CD4-positive, alpha-beta T cell (primary cell): ENCODE measurements at regions of chr9 and their contacts with region 1.

Region 1: GRCh38 chr9:88388172-88388885 is at the start of gene SPIN1:
- DNase-seq: peak; percentile 69 to 94 (median 84)
- ATAC-seq: peak; percentile 69
- H3K4me3 ChIP-seq: peak within 1 kb of the TSS; percentile 79
- H3K4me3 Mint-ChIP-seq: peak within 1 kb of the TSS; percentile 98
- H3K27ac ChIP-seq: peak within 1 kb of the TSS; percentile 45 to 64
- H3K27ac Mint-ChIP-seq: peak within 1 kb of the TSS; percentile 100
- H3K4me1 ChIP-seq: peaks cover 15% of the 10 kb centered on the region
- H3K4me1 Mint-ChIP-seq: peaks cover 47% of the 10 kb centered on the region
- H3K27me3 ChIP-seq: no peaks in the 10 kb centered on the region
- H3K27me3 Mint-ChIP-seq: no peaks in the 10 kb centered on the region
- CTCF ChIP-seq: no peak
- total RNA-seq, gene SPIN1: 27.7 to 30.3 TPM

Region 2: GRCh38 chr9:88173378-88173999 is 214.8 kb before region 1 on chr9:
- CTCF ChIA-PET with region 1: no interaction called
- POLR2A ChIA-PET with region 1: no interaction called
- intact Hi-C with region 1: loop called (anchors 1 to 10 kb)
- DNase-seq: peak; percentile 5 to 76 (median 44)
- ATAC-seq: peak; percentile 48
- H3K4me3 ChIP-seq: no peak overlapping the region
- H3K4me3 Mint-ChIP-seq: no peak overlapping the region
- H3K27ac ChIP-seq: no peak overlapping the region
- H3K27ac Mint-ChIP-seq: no peak overlapping the region
- H3K4me1 ChIP-seq: no peaks in the 10 kb centered on the region
- H3K4me1 Mint-ChIP-seq: peaks cover 1% of the 10 kb centered on the region
- H3K27me3 ChIP-seq: no peaks in the 10 kb centered on the region
- H3K27me3 Mint-ChIP-seq: peaks cover 3% of the 10 kb centered on the region
- CTCF ChIP-seq: peak; percentile 91

Region 3: DNA sequence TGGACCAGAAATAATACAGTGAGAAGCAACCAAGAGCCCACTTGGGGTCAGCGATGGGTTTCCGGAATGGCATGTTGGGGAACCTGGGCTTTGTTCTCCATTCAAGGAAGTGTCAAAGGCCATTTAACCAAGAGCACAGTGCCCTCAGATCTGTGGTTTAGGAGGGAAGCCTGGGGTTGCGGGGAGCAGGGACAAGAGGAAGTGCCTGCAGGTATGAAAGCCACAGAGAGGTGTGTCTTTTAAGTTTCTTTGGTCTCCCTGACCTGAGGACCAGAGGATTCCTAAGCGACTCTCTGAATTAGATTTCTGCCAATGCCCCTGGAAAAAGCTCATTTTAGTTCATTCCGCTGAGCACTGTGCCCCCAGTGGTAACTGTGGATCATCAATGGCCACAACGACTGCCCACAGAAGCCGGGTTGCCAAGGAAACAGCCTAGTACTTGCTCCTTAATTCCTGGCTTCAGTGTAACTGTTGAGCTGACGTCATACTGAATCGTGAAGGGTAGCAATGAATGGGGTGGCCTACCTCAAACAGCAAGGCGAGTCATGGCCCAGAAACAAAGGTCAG is 107.4 kb before region 1 on chr9:
- CTCF ChIA-PET with region 1: no interaction called
- POLR2A ChIA-PET with region 1: no interaction called
- intact Hi-C with region 1: no loop called
- DNase-seq: no peak
- ATAC-seq: no peak
- H3K4me3 ChIP-seq: no peak overlapping the region
- H3K4me3 Mint-ChIP-seq: no peak overlapping the region
- H3K27ac ChIP-seq: no peak overlapping the region
- H3K27ac Mint-ChIP-seq: no peak overlapping the region
- H3K4me1 ChIP-seq: peaks cover 7% of the 10 kb centered on the region
- H3K4me1 Mint-ChIP-seq: peaks cover 10% of the 10 kb centered on the region
- H3K27me3 ChIP-seq: no peaks in the 10 kb centered on the region
- H3K27me3 Mint-ChIP-seq: no peaks in the 10 kb centered on the region
- CTCF ChIP-seq: no peak

Region 4: DNA sequence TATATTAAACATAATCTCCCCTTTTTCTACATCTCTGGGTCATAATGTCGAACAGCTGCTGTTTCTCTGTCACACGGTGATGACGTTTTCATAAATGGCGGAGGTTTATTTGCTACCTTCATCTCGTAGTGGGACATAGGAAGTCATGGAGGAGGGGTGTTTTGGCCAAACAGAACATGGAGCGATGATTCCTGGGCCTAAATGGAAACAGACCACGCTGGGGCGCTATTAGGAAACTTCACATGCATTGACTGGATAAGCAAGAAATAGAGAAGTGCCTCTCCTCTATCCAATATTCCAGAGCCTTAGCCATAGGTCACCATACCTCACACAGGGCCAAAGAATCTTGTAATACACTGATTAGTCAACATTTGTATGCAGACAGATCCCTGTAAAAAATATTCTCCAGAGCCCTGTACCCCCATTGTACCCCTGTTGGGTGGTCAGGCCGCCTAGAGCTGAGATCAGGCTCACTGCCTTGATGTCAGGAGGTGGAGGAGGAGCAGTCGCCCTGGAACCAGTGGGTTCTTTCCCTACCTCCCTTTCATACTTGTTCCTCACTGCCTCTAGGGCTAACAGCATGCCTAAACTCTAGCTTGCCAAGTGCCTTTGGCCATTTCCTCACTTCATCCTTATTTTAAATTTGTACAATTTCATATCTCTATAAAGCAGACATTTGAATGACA is 77.9 kb before region 1 on chr9:
- CTCF ChIA-PET with region 1: no interaction called
- POLR2A ChIA-PET with region 1: no interaction called
- intact Hi-C with region 1: no loop called
- DNase-seq: no peak
- ATAC-seq: no peak
- H3K4me3 ChIP-seq: no peak overlapping the region
- H3K4me3 Mint-ChIP-seq: no peak overlapping the region
- H3K27ac ChIP-seq: no peak overlapping the region
- H3K27ac Mint-ChIP-seq: no peak overlapping the region
- H3K4me1 ChIP-seq: peaks cover 19% of the 10 kb centered on the region
- H3K4me1 Mint-ChIP-seq: peaks cover 27% of the 10 kb centered on the region
- H3K27me3 ChIP-seq: no peaks in the 10 kb centered on the region
- H3K27me3 Mint-ChIP-seq: no peaks in the 10 kb centered on the region
- CTCF ChIP-seq: no peak

Region 5: GRCh38 chr9:88322906-88323566 is 65.3 kb before region 1 on chr9:
- CTCF ChIA-PET with region 1: no interaction called
- POLR2A ChIA-PET with region 1: interaction called, 12 read pairs
- intact Hi-C with region 1: loop called (anchors 1 to 5 kb)
- DNase-seq: peak; percentile 15 to 90 (median 42)
- ATAC-seq: peak; percentile 98
- H3K4me3 ChIP-seq: no peak overlapping the region
- H3K4me3 Mint-ChIP-seq: peak overlapping the region; percentile 30
- H3K27ac ChIP-seq: no peak overlapping the region
- H3K27ac Mint-ChIP-seq: peak overlapping the region; percentile 64
- H3K4me1 ChIP-seq: peaks cover 33% of the 10 kb centered on the region
- H3K4me1 Mint-ChIP-seq: peaks cover 32% of the 10 kb centered on the region
- H3K27me3 ChIP-seq: no peaks in the 10 kb centered on the region
- H3K27me3 Mint-ChIP-seq: no peaks in the 10 kb centered on the region
- CTCF ChIP-seq: no peak

Region 6: DNA sequence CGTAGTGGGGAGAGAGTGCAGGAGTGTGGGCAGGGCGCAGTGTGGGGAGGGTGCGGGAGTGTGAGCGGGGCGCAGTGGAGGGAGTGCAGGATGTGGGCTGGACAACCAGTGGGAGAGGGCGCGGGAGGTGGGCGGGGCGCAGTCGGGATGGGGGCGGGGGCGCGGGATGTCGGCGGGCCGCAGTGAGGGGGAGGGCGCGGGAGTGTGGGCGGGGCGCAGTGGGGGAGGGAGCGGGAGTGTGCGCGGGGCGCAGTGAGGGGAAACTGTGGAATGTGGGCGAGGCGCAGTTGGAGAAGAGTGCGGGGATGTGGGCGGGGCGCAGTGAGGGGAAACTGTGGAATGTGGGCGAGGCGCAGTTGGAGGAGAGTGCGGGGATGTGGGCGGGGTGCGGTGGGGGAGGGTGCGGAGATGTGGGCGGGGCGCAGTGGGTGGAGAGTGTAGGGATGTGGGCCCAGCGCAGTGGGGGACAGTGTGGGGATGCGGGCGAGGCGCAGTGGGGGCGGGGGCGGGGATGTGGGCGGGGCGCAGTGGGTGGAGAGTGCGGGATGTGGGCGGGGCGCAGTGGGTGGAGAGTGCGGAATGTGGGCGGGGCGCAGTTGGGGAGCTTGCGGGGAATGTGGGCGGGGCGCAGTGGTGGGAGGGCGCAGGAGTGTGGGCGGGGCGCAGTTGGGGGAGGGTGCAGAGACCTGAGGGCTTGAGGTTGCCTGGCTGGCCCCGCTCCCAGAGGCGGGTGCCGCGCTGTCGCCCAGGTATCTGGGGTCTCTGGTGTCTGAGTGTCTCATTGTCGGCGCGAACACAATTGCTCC is 146.3 kb after region 1 on chr9 and contains the start of gene NXNL2:
- CTCF ChIA-PET with region 1: no interaction called
- POLR2A ChIA-PET with region 1: no interaction called
- intact Hi-C with region 1: loop called in 1 of 2 experiments (anchors 5 kb)
- DNase-seq: peak; percentile 19 to 74 (median 42)
- ATAC-seq: peak; percentile 71
- H3K4me3 ChIP-seq: peak within 1 kb of the TSS; percentile 43
- H3K4me3 Mint-ChIP-seq: peak within 1 kb of the TSS; percentile 85
- H3K27ac ChIP-seq: no peak within 1 kb of the TSS
- H3K27ac Mint-ChIP-seq: no peak within 1 kb of the TSS
- H3K4me1 ChIP-seq: peaks cover 18% of the 10 kb centered on the region
- H3K4me1 Mint-ChIP-seq: peaks cover 25% of the 10 kb centered on the region
- H3K27me3 ChIP-seq: peaks cover 23 to 28% of the 10 kb centered on the region in 2 experiments
- H3K27me3 Mint-ChIP-seq: peaks cover 21% of the 10 kb centered on the region
- CTCF ChIP-seq: no peak
- total RNA-seq, gene NXNL2: not detected

Region 7: DNA sequence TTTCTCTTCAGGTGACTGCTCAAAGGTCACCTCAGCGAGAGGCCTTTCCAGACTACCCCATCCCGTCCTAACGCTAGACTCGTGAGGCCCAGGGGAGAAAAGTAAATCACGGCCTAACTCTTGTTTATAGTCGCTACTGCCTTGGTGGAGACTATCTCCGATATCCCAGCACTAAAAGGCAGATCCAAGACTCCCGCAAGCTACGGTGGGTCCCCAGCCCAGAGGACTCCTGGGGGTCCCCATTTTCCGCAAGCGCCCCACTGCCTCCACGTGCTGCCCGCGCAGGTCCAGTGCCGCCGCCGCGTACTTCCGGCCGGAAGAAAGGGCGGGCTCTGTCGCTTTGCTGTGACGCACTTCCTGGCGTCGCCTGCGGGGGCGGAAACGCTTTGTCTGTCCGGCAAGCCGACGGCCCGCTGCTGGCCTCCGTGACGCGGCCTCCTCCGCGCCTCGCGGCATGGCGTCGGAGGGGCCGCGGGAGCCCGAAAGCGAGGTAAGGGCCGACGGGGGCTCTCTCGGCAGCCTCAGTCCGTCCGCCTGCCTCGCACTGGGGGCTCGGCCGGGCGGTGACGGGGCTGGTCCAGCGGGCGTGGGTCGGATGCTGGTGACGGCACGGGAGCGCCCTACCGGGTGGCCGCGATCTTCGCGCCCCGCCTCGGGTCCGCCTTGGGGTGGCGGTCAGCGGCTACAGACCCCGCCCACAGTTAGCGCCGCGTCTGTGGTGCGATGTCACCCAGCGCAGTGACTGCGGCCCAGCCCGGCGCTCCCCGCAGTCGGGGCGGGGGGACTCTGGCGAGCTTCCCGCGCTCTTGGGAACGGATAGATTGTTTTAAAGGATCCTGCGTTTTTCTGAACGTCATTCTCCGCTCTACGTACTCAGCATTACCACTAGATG is 930.0 kb after region 1 on chr9 and contains the start of gene SECISBP2:
- CTCF ChIA-PET with region 1: no interaction called
- POLR2A ChIA-PET with region 1: no interaction called
- intact Hi-C with region 1: loop called in 1 of 2 experiments (anchors 5 kb)
- DNase-seq: peak; percentile 85 to 97 (median 90)
- ATAC-seq: peak; percentile 87
- H3K4me3 ChIP-seq: peak within 1 kb of the TSS; percentile 69
- H3K4me3 Mint-ChIP-seq: peak within 1 kb of the TSS; percentile 88
- H3K27ac ChIP-seq: peak within 1 kb of the TSS; percentile 97 to 99
- H3K27ac Mint-ChIP-seq: peak within 1 kb of the TSS; percentile 94
- H3K4me1 ChIP-seq: peaks cover 22% of the 10 kb centered on the region
- H3K4me1 Mint-ChIP-seq: peaks cover 77% of the 10 kb centered on the region
- H3K27me3 ChIP-seq: no peaks in the 10 kb centered on the region
- H3K27me3 Mint-ChIP-seq: no peaks in the 10 kb centered on the region
- CTCF ChIP-seq: no peak
- total RNA-seq, gene SECISBP2: 109 to 112 TPM